Dorsolateral prefrontal cortex (tissue), 120 donors: ENCODE measurements at regions of chr3 and their contacts with region 1.

Region 1: DNA sequence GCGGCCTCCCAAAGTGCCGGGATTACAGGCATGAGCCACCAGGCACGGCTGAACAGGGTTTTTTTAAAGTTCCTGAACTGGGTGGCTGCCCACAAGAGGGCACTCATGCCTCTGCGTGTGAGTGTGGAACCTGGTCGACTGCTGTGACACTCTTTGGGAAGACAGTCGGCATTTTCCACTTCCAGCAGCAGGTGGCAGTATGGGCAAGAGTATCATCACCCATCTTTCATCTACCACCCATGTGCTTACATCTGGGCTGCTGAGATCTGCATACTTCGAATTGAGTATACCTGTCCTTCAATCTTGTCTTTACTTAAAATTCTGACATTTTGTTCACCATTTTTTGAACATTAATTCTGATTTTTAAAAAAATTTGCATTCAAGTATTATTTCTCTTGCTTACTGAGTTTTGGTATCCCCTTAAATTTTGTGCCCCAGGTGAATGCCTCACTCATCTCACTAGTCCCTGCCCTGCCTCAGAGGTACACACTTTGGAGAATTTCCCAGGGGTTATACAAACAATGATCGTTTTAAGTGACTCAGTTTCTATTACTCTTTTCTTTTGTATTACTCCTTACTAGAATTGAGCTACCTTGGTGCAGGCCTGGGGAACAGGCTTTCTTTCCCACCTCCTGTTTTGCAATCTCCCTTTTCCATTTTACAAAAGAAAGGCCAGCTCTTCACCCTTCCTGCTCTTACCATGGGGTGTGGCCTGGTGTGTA is 11.8 kb downstream of the CLEC3B start:
- DNase-seq: peak; percentile 83 to 98 (median 92)
- H3K4me3 ChIP-seq: peak overlapping the region in 30 of 59 donors; percentile 0 to 46 (median 22)
- H3K27ac ChIP-seq: no peak overlapping the region
- H3K27me3 ChIP-seq: no peaks in the 10 kb centered on the region
- CTCF ChIP-seq: peak; percentile 83 to 100 (median 96)

Region 2: GRCh38 chr3:44825264-44825925 is 212.5 kb before region 1 on chr3:
- intact Hi-C with region 1: no loop called
- DNase-seq: no peak
- H3K4me3 ChIP-seq: no peak overlapping the region
- H3K27ac ChIP-seq: no peak overlapping the region
- H3K27me3 ChIP-seq: no peaks in the 10 kb centered on the region
- CTCF ChIP-seq: no peak

Region 3: DNA sequence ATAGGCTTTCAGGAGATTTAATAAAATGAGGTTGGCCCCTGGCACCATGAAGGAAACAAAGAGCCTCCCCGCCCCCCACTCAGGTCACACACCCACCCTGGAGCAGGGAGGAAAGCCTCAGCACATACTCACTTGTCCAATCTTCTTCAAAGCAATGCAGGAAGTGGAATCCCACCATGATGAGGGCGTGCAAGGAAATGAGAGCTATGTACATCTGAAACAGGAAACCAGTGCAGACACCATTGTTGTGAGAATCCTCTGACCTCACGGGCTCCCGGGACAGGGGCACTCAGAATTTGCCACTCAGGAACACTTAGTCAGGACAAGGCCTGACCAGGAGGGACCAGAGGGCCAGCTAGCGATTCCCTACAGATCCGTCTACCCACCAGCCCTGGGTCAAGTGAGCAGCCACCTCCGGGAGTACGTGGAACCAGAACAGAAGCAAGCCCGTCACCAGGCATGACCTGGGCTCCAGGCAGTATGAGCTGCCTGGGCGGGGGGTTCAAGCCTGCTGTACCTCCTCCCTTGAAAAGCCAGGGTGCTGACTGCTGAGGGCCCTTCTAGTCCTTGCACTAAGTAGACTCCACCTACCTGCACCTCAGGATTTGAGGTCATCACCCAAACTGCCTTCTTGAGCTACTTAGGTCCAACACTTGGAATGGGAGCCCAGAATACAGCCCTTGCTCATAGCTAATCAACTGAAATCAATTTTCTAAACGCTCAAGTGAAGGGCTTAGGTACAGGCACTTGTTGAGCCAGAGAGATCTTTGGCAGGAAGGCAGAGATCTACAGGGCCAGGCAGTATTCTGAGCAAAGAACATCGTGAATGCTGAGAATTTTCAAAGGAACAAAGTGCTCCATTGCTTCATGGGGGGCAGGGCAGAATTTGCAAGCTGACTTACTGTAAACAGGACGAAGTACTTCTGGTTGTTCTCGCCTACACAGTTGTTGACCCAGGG is 104.6 kb before region 1 on chr3:
- intact Hi-C with region 1: no loop called
- DNase-seq: no peak
- H3K4me3 ChIP-seq: no peak overlapping the region
- H3K27ac ChIP-seq: no peak overlapping the region
- H3K27me3 ChIP-seq: no peaks in the 10 kb centered on the region
- CTCF ChIP-seq: no peak

Region 4: GRCh38 chr3:45001738-45002137 is 36.2 kb before region 1 on chr3:
- intact Hi-C with region 1: no loop called
- DNase-seq: no peak
- H3K4me3 ChIP-seq: no peak overlapping the region
- H3K27ac ChIP-seq: no peak overlapping the region
- H3K27me3 ChIP-seq: no peaks in the 10 kb centered on the region
- CTCF ChIP-seq: peak in 1 of 56 donors; percentile 9

Region 5: GRCh38 chr3:45269952-45270351 is 232.1 kb after region 1 on chr3:
- intact Hi-C with region 1: no loop called
- DNase-seq: no peak
- H3K4me3 ChIP-seq: no peak overlapping the region
- H3K27ac ChIP-seq: no peak overlapping the region
- H3K27me3 ChIP-seq: peaks cover 0 to 6% (median 0%) of the 10 kb centered on the region in 45 donors
- CTCF ChIP-seq: no peak

Region 6: GRCh38 chr3:45499529-45499928 is 461.6 kb after region 1 on chr3:
- intact Hi-C with region 1: loop called in 1 of 2 experiments (anchors 2 kb)
- DNase-seq: no peak
- H3K4me3 ChIP-seq: no peak overlapping the region
- H3K27ac ChIP-seq: no peak overlapping the region
- H3K27me3 ChIP-seq: no peaks in the 10 kb centered on the region
- CTCF ChIP-seq: peak; percentile 25 to 77 (median 62)

Region 7: DNA sequence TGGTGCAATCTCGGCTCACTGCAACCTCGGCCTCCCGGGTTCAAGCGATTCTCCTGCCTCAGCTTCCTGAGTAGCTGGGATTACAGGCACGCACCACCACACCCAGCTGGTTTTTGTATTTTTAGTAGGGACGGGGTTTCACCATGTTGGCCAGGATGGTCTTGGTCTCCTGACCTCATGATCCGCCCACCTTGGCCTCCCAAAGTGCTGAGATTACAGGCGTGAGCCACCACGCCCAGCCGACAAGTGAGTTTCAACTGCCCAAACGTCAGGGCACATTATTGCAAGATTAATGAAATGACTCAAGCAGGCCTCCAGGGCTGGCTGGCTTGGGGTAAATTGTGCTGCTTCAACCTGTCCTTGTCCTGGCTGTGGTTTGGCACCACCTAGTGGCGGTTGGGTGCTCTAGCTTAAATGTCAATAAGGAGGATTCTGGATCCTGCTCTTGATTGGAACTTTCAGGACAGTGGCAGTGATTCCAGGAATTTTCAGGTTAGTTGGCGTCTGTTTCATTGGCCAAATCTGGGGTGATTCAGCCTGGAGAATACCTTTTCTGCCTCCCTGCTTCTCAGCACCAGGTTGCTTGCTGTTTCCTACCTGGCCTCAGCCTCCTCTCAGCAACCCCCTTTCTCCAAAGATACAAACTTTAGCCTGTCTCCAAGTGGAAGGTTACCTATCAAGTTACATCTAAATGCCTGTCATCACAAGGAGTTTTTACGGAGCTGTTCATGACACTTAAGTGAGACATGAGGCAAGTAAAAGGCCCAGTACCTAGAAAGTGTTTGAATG is 618.9 kb after region 1 on chr3:
- intact Hi-C with region 1: loop called (anchors 5 kb)
- DNase-seq: peak; percentile 79 to 94 (median 89)
- H3K4me3 ChIP-seq: no peak overlapping the region
- H3K27ac ChIP-seq: no peak overlapping the region
- H3K27me3 ChIP-seq: no peaks in the 10 kb centered on the region
- CTCF ChIP-seq: peak; percentile 89 to 98 (median 95)